Activated CD4-positive, alpha-beta memory T cell treated with anti-CD3 and anti-CD28 coated beads for 36 hours (primary cell): ENCODE measurements at regions of chr3 and their contacts with region 1.

Region 1: GRCh38 chr3:113745273-113746068 is 578 bp downstream of the NAA50 start:
- DNase-seq: peak; percentile 89
- H3K4me3 Mint-ChIP-seq: peak overlapping the region; percentile 91
- H3K27ac Mint-ChIP-seq: peak overlapping the region; percentile 100
- H3K4me1 Mint-ChIP-seq: peaks cover 64% of the 10 kb centered on the region
- H3K27me3 Mint-ChIP-seq: no peaks in the 10 kb centered on the region

Region 2: GRCh38 chr3:112143251-112143650 is 1602.2 kb before region 1 on chr3:
- CTCF ChIA-PET with region 1: no interaction called
- POLR2A ChIA-PET with region 1: no interaction called
- intact Hi-C with region 1: loop called (anchors 5 kb)
- DNase-seq: no peak
- H3K4me3 Mint-ChIP-seq: peak overlapping the region; percentile 53
- H3K27ac Mint-ChIP-seq: peak overlapping the region; percentile 77
- H3K4me1 Mint-ChIP-seq: peaks cover 30% of the 10 kb centered on the region
- H3K27me3 Mint-ChIP-seq: no peaks in the 10 kb centered on the region

Region 3: DNA sequence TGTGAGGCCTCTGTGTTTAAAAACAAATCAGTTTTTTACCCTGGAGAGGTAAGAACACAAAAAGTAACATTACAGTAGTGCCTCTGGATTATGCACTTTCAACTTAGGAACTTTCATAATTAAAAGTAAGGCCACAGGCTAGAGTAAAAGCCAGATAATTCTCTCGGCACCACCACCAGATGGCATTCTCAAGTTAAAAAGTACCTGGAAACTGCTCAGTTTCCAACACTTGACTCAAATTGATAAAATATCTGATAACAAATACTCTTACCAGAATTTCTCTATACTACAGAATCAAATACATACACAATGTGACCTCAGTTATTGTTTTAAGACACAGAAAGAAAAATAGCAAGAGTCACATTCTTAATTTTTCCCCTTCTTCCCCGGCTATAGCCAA is 250.4 kb before region 1 on chr3:
- CTCF ChIA-PET with region 1: interaction called, 15 read pairs
- POLR2A ChIA-PET with region 1: no interaction called
- intact Hi-C with region 1: loop called (anchors 1 kb)
- DNase-seq: peak; percentile 40
- H3K4me3 Mint-ChIP-seq: no peak overlapping the region
- H3K27ac Mint-ChIP-seq: no peak overlapping the region
- H3K4me1 Mint-ChIP-seq: peaks cover 3% of the 10 kb centered on the region
- H3K27me3 Mint-ChIP-seq: no peaks in the 10 kb centered on the region

Region 4: DNA sequence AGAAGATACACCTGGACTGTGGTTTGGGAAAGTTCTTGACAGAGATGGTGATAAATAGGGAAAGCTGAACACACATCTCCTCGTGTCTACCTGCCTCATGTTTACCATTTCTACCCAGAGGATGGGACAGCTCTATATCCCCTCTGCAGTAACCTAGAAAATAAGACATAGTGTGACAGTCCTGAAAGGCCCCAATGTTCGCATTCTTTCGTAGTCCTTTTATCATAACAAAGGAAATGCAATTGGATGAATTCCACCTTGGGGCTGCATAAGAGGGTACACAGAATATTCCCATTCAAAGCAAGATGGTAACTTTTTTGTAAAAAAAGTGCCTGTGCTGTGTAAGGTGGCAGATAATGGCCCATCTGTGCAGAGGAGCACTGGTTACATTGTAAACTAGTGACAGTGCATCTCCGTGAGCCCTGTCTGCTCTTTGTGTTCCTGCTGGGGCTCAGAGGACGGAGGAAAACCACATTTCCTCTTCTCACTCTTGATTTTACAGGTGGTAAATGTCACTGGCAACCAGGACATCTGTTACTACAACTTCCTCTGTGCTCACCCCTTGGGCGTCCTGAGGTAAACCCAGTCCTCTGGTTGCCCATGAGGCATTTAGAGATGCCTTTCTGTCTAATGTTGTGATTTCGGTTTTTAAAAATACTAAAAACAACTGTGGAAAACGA is 138.8 kb before region 1 on chr3:
- CTCF ChIA-PET with region 1: no interaction called
- POLR2A ChIA-PET with region 1: no interaction called
- intact Hi-C with region 1: loop called (anchors 1 kb)
- DNase-seq: peak; percentile 67
- H3K4me3 Mint-ChIP-seq: no peak overlapping the region
- H3K27ac Mint-ChIP-seq: no peak overlapping the region
- H3K4me1 Mint-ChIP-seq: peaks cover 18% of the 10 kb centered on the region
- H3K27me3 Mint-ChIP-seq: no peaks in the 10 kb centered on the region

Region 5: DNA sequence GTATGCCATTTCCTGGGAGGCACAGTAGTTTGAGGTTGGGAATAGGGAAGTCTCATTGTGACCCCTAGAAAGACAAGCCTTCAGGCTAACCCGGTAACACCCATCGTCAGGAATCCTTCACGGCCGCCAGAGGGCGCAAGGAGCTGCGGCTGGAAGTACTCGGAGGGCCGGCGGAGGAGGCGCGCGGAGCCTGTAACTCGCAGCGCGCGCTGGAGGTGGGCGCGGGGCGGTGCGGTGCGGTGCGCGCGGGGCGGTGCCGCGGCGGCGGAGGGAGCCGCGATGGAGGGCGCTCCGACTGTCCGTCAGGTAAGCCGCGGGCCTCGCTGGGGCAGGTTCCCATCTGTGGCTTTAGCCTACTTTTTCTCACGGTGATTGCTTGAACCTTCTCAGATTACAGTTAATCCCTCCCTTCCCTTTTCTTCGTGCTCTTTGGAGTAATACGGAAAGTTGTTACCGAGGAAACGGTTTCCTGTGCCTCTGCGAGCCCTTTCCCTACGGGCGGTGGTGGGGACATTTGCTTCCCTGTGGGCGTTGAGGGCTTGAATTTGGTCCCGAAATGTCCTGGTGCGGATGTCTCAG is 93.2 kb after region 1 on chr3 and contains the start of gene GRAMD1C:
- CTCF ChIA-PET with region 1: interaction called, 10 read pairs
- POLR2A ChIA-PET with region 1: no interaction called
- intact Hi-C with region 1: loop called (anchors 2 kb)
- DNase-seq: peak; percentile 89
- H3K4me3 Mint-ChIP-seq: peak within 1 kb of the TSS; percentile 68
- H3K27ac Mint-ChIP-seq: no peak within 1 kb of the TSS
- H3K4me1 Mint-ChIP-seq: peaks cover 6% of the 10 kb centered on the region
- H3K27me3 Mint-ChIP-seq: no peaks in the 10 kb centered on the region
- total RNA-seq, gene GRAMD1C: 0.64 to 1.2 TPM

Region 6: DNA sequence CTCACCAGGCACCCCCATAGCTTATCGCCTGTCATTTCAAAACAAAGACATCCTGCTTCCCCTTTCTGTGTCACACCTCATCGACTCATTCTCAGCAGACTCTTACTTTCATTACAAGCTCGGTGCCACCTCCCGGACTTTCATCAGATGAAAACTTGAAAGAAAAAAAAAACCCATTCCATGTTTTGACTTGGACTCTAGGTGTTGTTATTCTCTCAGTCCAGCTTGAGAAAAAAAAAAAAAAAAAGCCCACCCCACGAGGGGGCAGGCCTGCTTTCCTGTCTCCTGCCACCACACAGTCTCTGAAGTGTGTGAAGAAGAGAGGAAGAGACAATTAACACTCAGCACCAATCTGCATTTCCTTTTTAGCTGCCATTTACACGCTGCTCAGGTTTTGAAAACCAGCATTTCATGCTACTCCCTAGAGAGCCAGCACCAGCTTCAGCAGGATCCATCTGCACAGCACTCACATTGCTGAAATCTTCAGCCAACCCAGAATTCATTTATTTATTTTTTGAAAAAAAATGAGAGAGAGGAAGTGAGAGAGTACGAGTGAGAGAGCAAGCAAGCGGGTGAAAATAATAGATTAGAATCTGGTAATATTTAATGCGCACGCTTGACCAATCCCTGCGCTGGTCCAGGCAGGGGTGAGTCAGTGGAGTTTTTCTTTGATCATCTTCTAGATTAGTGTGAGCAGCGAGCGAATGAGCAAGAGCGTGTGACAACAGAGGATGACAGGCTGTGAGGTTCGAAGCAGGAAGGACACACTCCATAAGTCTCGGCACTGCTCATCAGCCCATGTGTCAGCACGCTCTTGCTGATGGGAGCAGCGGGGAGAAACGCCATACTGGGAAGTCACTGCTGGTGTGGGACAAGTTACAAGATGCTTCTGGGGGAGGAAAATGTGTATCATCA is 468.4 kb after region 1 on chr3:
- CTCF ChIA-PET with region 1: no interaction called
- POLR2A ChIA-PET with region 1: interaction called, 3 read pairs
- intact Hi-C with region 1: loop called (anchors 1 kb)
- DNase-seq: peak; percentile 89
- H3K4me3 Mint-ChIP-seq: no peak overlapping the region
- H3K27ac Mint-ChIP-seq: no peak overlapping the region
- H3K4me1 Mint-ChIP-seq: peaks cover 4% of the 10 kb centered on the region
- H3K27me3 Mint-ChIP-seq: no peaks in the 10 kb centered on the region